HepG2 (cell line): ENCODE measurements at regions of chr1 and their contacts with region 1.

Region 1: GRCh38 chr1:220217383-220217988 is 54.8 kb downstream of the RAB3GAP2 start:
- DNase-seq: peak; percentile 25
- ATAC-seq: peak; percentile 74
- H3K4me3 ChIP-seq: no peak overlapping the region
- H3K27ac ChIP-seq: no peak overlapping the region
- H3K4me1 ChIP-seq: no peaks in the 10 kb centered on the region
- H3K27me3 ChIP-seq: no peaks in the 10 kb centered on the region; a peak in 1 of 5 replicates
- CTCF ChIP-seq: peak; percentile 46
- EP300 ChIP-seq: no peak
- POLR2A ChIP-seq: no peak
- RAD21 ChIP-seq: no peak

Region 2: GRCh38 chr1:220272047-220272840 is 54.8 kb after region 1 on chr1 and contains the start of gene RAB3GAP2:
- CTCF ChIA-PET with region 1: no interaction called
- POLR2A ChIA-PET with region 1: no interaction called
- in situ Hi-C with region 1: no loop called
- intact Hi-C with region 1: loop called (anchors 5 kb)
- DNase-seq: peak; percentile 88
- ATAC-seq: peak; percentile 97
- H3K4me3 ChIP-seq: peak within 1 kb of the TSS; percentile 86 to 99 (median 96)
- H3K27ac ChIP-seq: peak within 1 kb of the TSS; percentile 78
- H3K4me1 ChIP-seq: peaks cover 35% of the 10 kb centered on the region
- H3K27me3 ChIP-seq: peaks cover 0 to 4% of the 10 kb centered on the region in 2 experiments; a peak in 2 of 5 replicates
- CTCF ChIP-seq: peak; percentile 8; the same call in 1 of the 2 replicates
- EP300 ChIP-seq: no peak
- POLR2A ChIP-seq: peak; percentile 88 to 91
- RAD21 ChIP-seq: 0 out of 2 replicates have a peak, but pooled peaks have one; percentile 18
- total RNA-seq, gene RAB3GAP2: 25.0 and 34.2 TPM in 2 replicates

Region 3: GRCh38 chr1:220527908-220528678 is 310.6 kb after region 1 on chr1 and contains the start of gene MARK1:
- CTCF ChIA-PET with region 1: no interaction called
- POLR2A ChIA-PET with region 1: no interaction called
- in situ Hi-C with region 1: no loop called
- intact Hi-C with region 1: loop called (anchors 5 kb)
- DNase-seq: no peak
- ATAC-seq: peak; percentile 87
- H3K4me3 ChIP-seq: peak within 1 kb of the TSS; percentile 52 to 69 (median 54)
- H3K27ac ChIP-seq: no peak within 1 kb of the TSS
- H3K4me1 ChIP-seq: peaks cover 7% of the 10 kb centered on the region
- H3K27me3 ChIP-seq: peaks cover 5 to 39% of the 10 kb centered on the region in 2 experiments; a peak in 4 of 5 replicates
- CTCF ChIP-seq: no peak
- EP300 ChIP-seq: no peak
- POLR2A ChIP-seq: no peak
- RAD21 ChIP-seq: no peak
- total RNA-seq, gene MARK1: not detected in 2 replicates